ENCODE measurements at regions of chr4 and their contacts with region 1.

Region 1: DNA sequence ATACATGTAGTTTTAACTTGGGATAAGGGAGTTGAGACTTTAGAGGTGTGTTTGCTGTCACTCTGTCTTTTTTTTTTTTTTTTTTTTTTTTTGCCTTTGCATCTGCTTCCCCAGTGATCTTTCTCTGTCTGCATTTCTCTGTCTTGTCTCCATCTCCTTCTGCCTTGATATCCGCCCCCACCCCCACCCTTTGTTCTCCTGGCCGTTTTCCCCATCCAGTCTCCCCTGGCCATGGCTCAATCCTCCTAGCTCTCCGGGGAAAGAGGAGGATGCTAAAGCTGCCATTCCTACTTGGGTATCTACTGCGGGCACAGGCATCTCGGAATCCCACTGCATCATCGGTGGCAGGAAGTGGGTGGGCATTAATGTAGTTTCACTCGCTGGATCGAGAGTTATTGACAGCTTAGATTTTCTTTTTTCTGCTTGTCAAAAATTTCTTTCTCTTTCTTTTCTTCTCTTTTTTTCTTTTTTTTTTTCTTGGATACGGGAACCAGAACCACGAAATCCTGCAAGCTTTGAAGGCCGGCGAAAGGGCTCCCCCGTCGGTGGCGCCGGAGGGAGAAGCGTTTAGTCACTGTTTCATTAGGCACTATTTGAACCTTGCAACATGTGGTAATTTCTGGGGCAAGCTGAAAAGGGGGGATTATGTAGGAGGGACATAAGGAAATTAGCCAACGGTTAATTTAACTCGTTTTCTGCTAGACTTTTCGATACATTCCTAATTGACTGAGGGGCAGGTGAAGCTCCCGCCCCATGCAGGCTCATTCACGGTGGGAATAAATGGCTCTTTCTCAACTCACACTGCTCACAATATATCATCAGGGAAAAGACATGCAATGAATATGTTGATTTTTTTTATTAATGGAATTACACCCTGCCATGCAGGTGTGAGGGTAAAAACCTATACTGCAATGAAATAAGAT is 8.2 kb downstream of the GSX2 start:
- DNase-seq: no peak
- H3K4me3 Mint-ChIP-seq: peak overlapping the region; percentile 52
- H3K27ac Mint-ChIP-seq: no peak overlapping the region
- H3K4me1 Mint-ChIP-seq: peaks cover 40% of the 10 kb centered on the region
- H3K27me3 Mint-ChIP-seq: peaks cover 77% of the 10 kb centered on the region

Region 2: GRCh38 chr4:54091637-54092404 is 16.4 kb before region 1 on chr4:
- CTCF ChIA-PET with region 1: no interaction called
- intact Hi-C with region 1: loop called (anchors 2 kb)
- DNase-seq: peak; percentile 74
- H3K4me3 Mint-ChIP-seq: peak overlapping the region; percentile 88
- H3K27ac Mint-ChIP-seq: no peak overlapping the region
- H3K4me1 Mint-ChIP-seq: peaks cover 31% of the 10 kb centered on the region
- H3K27me3 Mint-ChIP-seq: peaks cover 44% of the 10 kb centered on the region

Measured in activated naive CD4-positive, alpha-beta T cell treated with anti-CD3 and anti-CD28 coated beads for 36 hours (primary cell).